GM23248 (cell line): ENCODE measurements at regions of chr12 and their contacts with region 1.

Region 1: DNA sequence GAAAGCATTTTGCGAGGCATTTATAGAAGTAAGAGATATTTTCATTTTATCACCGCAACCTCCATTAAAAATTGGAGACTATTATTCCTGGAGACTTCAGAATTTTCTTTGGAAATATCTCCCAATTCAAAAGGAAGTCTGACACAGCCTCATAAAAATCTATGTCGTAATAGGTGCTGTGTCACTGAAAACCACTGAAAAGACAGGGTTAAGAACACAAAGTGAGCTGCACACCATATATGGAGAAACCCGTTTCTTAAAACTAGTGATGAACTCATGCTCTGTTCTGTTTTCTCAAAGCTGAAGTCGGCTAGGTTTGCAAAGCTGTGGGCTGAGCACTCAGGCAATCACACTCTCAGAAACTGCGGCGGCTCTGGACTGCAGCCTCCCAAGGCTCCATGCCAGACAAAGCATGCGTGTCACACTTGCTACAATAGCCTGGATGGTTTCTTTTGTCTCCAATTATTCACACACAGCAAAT is at the start of gene GLIPR1:
- DNase-seq: peak; percentile 99
- H3K4me3 ChIP-seq: peak within 1 kb of the TSS; percentile 86
- H3K27ac ChIP-seq: peak within 1 kb of the TSS; percentile 93
- H3K4me1 ChIP-seq: peaks cover 54% of the 10 kb centered on the region
- H3K27me3 ChIP-seq: no peaks in the 10 kb centered on the region
- total RNA-seq, gene GLIPR1: 272 and 303 TPM in 2 replicates

Region 2: DNA sequence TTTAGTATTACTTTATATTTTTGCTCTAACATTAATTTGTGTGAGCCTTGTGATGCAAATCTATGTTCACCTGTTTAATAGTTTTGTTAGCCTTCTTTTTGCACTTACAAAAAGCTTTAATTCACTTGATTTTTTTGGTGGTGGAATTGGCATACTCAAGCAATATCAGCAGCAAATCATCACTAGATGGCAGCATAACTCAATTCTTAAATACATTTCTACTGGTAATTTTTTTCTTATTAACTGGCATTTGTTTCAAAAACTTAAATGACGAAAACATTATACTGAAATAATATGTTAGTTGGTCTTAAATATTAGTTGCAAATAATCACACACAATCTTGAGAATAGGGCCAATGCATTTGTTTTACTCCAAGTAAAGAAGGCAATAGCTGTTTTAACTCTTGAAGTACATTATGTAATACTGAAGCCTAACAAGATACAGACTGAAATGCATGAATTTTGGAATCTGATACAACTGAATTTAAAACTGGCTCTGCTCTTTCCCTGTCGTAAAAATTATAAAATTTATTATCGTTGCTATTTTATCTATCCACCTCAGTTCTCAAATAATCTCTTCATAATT is 791.3 kb before region 1 on chr12:
- in situ Hi-C with region 1: loop called (anchors 25 kb)
- DNase-seq: peak; percentile 65
- H3K4me3 ChIP-seq: no peak overlapping the region
- H3K27ac ChIP-seq: no peak overlapping the region
- H3K4me1 ChIP-seq: no peaks in the 10 kb centered on the region
- H3K27me3 ChIP-seq: no peaks in the 10 kb centered on the region; the same call in 1 of the 2 replicates

Region 3: DNA sequence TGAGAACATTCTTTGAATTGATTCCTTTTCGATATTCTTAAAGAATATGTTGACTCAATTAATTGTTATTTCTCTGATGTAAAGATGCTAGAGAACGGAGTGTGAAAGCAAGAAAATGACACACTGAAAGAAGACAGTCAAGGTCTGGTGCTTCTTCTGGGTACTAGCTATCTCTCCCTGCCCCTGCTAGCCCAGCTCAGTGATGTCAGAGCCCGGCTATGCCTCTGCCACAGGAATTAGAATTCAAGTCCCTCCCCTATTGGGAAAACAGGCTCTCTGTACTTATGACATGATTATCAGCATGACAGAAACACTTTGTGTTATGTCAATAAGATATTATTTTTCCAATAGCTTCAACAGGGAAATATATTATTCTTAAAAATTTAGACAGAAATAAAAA is 523.3 kb before region 1 on chr12:
- in situ Hi-C with region 1: no loop called
- DNase-seq: no peak
- H3K4me3 ChIP-seq: no peak overlapping the region
- H3K27ac ChIP-seq: no peak overlapping the region
- H3K4me1 ChIP-seq: no peaks in the 10 kb centered on the region
- H3K27me3 ChIP-seq: no peaks in the 10 kb centered on the region

Region 4: DNA sequence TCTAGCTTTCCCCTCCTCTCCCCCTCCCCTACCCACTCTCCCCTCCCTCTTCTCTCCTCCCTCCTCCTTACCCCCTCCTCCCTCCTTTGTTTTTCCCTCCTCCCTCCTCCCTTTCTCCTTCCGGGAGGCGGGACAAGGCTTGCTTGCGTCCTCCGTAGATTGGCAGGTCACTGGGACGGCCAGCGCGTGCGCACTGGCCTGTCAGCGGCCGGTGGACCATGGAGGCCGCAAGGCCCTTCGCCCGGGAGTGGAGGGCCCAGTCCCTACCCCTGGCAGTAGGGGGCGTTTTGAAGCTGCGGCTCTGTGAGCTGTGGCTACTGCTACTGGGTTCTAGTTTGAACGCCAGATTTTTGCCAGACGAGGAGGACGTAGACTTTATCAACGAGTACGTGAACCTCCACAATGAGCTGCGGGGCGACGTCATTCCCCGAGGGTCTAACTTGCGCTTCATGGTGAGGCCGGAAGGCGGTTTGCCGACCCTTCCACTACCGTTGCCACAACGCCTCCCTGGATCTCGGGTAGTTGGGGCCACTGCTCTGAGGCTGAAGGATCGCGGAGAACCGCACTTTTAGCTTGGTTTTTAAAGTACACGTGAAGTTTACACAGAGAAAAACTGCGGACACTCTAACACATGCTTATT is 89.5 kb before region 1 on chr12 and contains the start of gene GLIPR1L2:
- in situ Hi-C with region 1: loop called (anchors 10 kb)
- DNase-seq: peak; percentile 98
- H3K4me3 ChIP-seq: peak within 1 kb of the TSS; percentile 73
- H3K27ac ChIP-seq: peak within 1 kb of the TSS; percentile 74
- H3K4me1 ChIP-seq: peaks cover 35% of the 10 kb centered on the region
- H3K27me3 ChIP-seq: no peaks in the 10 kb centered on the region
- total RNA-seq, gene GLIPR1L2: 0.51 and 1.6 TPM in 2 replicates

Region 5: DNA sequence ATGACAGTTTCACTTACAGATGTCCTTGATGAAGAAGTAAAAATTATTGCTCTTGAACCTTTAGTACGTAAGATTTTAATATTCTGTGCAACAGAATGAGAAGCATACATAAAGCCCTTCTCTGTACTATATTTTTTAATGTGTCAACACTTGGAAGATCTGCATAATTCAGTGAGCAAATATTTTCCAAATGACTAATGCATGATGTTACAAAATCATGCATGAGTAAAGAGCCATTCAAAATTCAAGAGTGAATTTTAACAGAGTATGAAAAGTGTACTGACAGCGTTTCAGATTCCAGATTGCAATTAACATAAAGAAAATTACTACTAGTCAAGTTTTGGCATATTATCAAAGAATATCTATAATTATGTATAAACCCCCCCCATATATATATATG is 969.1 kb after region 1 on chr12:
- in situ Hi-C with region 1: no loop called
- DNase-seq: peak; percentile 77
- H3K4me3 ChIP-seq: 0 out of 2 replicates have a peak overlapping the region, but pooled peaks have one; percentile 7
- H3K27ac ChIP-seq: peak overlapping the region; percentile 81
- H3K4me1 ChIP-seq: peaks cover 26% of the 10 kb centered on the region
- H3K27me3 ChIP-seq: no peaks in the 10 kb centered on the region